A673 (cell line): ENCODE measurements at regions of chr14 and their contacts with region 1.

Region 1: DNA sequence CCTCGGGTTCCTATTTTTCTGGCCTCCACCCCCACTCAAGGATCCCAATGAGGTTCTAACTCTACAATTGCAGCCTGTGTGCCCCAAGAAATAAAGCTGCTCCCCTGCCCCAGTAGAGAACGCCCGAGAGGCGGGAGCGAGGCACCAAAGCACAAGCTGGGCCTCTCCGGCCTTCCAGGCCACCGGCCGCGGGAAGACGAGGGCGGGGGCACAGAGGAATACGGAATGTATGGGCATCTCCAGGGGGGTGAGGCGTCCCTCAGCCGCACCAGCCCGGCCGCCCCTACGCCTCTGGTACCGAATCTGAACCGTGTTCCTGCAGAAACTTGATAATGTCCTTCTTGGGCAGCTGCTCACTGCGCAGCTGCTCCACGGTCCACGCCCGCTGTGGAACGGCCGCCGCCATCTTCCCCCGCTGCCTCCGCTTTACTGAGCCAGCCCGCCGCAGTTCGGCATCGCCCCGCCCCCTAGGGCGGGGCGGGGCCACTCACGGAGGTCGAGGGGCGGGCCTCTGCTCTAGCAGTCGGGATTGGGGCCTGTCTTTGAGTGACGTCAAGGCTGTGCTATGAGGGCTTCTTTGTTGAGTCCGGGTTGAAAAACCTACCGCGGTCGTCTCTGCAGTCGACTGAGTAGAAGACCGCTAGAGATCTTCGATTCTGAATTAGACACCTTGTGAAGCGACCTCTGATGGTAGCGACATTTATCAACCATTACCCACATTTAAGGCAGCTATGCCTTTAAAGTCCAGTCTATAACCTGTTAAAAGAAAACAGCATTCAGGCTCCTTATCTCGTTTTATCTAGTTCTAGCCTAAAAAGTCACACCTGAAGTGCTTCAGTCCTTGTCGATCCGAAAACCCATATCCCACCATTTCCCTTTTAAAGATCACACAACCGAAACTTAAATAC is at the start of gene FKBP3:
- DNase-seq: peak; percentile 99
- H3K4me3 ChIP-seq: peak within 1 kb of the TSS; percentile 83
- H3K27ac ChIP-seq: peak within 1 kb of the TSS; percentile 92
- H3K4me1 ChIP-seq: peaks cover 17% of the 10 kb centered on the region
- H3K27me3 ChIP-seq: no peaks in the 10 kb centered on the region
- CTCF ChIP-seq: peak; percentile 47
- total RNA-seq, gene FKBP3: 162 and 164 TPM in 2 replicates

Region 2: DNA sequence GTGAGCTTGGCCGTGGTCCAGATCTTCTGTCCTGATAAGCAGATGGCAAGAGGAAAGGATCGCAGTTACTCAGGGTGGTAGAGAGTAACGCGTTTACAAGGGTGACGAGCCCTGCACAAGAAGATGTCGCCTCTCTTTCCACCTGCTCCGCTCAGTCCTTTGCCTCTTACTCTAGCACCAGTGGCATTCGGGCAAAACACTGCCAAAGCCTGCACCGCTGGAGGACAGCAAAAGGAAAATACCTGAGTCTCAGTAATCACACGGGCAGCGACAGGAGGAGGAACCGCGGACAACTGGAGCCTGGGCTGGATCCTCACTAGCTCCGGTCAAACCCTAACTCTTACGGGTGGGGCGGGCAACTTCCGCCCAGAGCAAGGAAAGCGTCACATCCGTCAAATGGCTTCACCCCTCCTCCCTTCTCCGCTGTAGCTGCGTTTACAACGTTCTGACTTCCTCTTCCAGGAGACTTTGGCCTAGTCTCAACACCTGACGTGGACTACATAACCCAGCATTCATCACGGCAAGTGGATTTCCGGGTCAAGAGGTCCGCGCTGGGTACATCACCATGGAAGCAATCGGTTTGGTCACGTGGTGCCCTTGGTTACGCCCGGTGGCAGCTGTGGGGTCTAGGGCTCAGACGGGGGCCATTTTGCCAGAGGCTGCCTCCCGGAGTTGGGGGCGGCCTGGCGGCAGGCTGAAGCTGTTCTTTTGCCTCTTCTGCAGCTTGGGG is 172.5 kb before region 1 on chr14 and contains the starts of genes KLHL28 and TOGARAM1:
- CTCF ChIA-PET with region 1: no interaction called
- POLR2A ChIA-PET with region 1: no interaction called
- intact Hi-C with region 1: loop called (anchors 2 kb)
- DNase-seq: peak; percentile 100
- H3K4me3 ChIP-seq: peak within 1 kb of the TSS; percentile 76
- H3K27ac ChIP-seq: peak within 1 kb of the TSS; percentile 85
- H3K4me1 ChIP-seq: peaks cover 16% of the 10 kb centered on the region
- H3K27me3 ChIP-seq: no peaks in the 10 kb centered on the region
- CTCF ChIP-seq: no peak
- total RNA-seq, gene KLHL28: 10.0 and 10.6 TPM in 2 replicates
- total RNA-seq, gene TOGARAM1: 16.8 and 18.5 TPM in 2 replicates

Region 3: GRCh38 chr14:45156060-45156459 is 21.8 kb after region 1 on chr14:
- CTCF ChIA-PET with region 1: no interaction called
- POLR2A ChIA-PET with region 1: no interaction called
- intact Hi-C with region 1: no loop called
- DNase-seq: no peak
- H3K4me3 ChIP-seq: no peak overlapping the region
- H3K27ac ChIP-seq: no peak overlapping the region
- H3K4me1 ChIP-seq: no peaks in the 10 kb centered on the region
- H3K27me3 ChIP-seq: no peaks in the 10 kb centered on the region
- CTCF ChIP-seq: no peak

Region 4: GRCh38 chr14:45253068-45253753 is 118.9 kb after region 1 on chr14 and contains the start of gene MIS18BP1:
- CTCF ChIA-PET with region 1: interaction called, 10 read pairs
- POLR2A ChIA-PET with region 1: no interaction called
- intact Hi-C with region 1: loop called (anchors 2 kb)
- DNase-seq: peak; percentile 99
- H3K4me3 ChIP-seq: peak within 1 kb of the TSS; percentile 86
- H3K27ac ChIP-seq: peak within 1 kb of the TSS; percentile 87
- H3K4me1 ChIP-seq: peaks cover 10% of the 10 kb centered on the region
- H3K27me3 ChIP-seq: no peaks in the 10 kb centered on the region
- CTCF ChIP-seq: peak; percentile 85
- total RNA-seq, gene MIS18BP1: 61.0 and 63.0 TPM in 2 replicates

Region 5: DNA sequence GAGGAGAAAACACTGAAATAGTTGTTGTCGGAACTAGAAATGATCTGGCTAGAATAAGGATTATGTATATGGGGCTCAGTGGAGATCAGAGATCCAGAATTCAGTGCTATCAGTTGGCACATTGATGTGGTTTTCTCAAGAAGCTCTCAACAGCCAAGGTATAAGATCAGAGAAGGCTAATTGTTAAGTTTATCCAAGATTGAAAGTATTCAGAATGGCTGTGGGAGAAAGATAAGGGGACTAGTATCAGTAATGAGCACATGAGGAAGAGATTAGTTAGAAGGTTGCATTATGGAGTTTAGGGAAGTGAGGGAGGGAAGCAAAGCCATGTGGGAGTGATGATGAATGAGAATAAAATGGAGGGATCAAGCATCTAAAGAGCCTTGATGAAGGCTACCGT is 246.8 kb after region 1 on chr14:
- CTCF ChIA-PET with region 1: no interaction called
- POLR2A ChIA-PET with region 1: no interaction called
- intact Hi-C with region 1: no loop called
- DNase-seq: no peak
- H3K4me3 ChIP-seq: no peak overlapping the region
- H3K27ac ChIP-seq: no peak overlapping the region
- H3K4me1 ChIP-seq: no peaks in the 10 kb centered on the region
- H3K27me3 ChIP-seq: no peaks in the 10 kb centered on the region
- CTCF ChIP-seq: no peak

Region 6: DNA sequence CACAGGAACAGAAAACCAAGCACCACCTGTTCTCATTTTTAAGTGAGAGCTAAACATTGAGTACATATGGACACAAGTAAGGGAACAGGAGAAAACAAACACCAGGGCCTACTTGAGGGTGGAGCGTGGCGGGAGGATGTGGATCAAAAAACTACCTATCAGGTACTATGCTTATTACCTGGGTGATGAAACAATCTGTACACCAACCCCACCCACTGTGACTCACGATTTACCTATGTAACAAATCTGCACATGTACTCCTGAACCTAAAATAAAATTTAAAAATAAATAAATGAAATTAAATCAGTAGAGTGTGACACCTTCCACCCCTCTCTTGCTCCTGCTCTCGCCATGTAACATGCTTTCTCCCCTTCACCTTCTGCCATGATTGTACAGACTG is 901.8 kb after region 1 on chr14:
- CTCF ChIA-PET with region 1: no interaction called
- POLR2A ChIA-PET with region 1: no interaction called
- intact Hi-C with region 1: no loop called
- DNase-seq: no peak
- H3K4me3 ChIP-seq: no peak overlapping the region
- H3K27ac ChIP-seq: no peak overlapping the region
- H3K4me1 ChIP-seq: no peaks in the 10 kb centered on the region
- H3K27me3 ChIP-seq: no peaks in the 10 kb centered on the region
- CTCF ChIP-seq: no peak